ENCODE measurements at regions of chr10 and their contacts with region 1.

Region 1: GRCh38 chr10:72173635-72174296 is 42.0 kb upstream of the ANAPC16 start:
- DNase-seq: peak; percentile 86
- ATAC-seq: peak; percentile 91
- H3K4me3 ChIP-seq: no peak overlapping the region; the same call in 1 of the 2 replicates
- H3K27ac ChIP-seq: peak overlapping the region; percentile 67
- H3K4me1 ChIP-seq: peaks cover 35% of the 10 kb centered on the region
- H3K27me3 ChIP-seq: no peaks in the 10 kb centered on the region
- CTCF ChIP-seq: no peak
- EP300 ChIP-seq: no peak
- POLR2A ChIP-seq: no peak
- RAD21 ChIP-seq: no peak

Region 2: GRCh38 chr10:71948496-71949088 is 225.2 kb before region 1 on chr10:
- CTCF ChIA-PET with region 1: no interaction called
- POLR2A ChIA-PET with region 1: no interaction called
- RAD21 ChIA-PET with region 1: no interaction called
- SMC1A ChIA-PET with region 1: no interaction called
- in situ Hi-C with region 1: no loop called
- intact Hi-C with region 1: no loop called
- DNase-seq: no peak
- ATAC-seq: no peak
- H3K4me3 ChIP-seq: no peak overlapping the region
- H3K27ac ChIP-seq: no peak overlapping the region
- H3K4me1 ChIP-seq: no peaks in the 10 kb centered on the region
- H3K27me3 ChIP-seq: peaks cover 0 to 3% of the 10 kb centered on the region in 2 experiments; a peak in 2 of 4 replicates
- CTCF ChIP-seq: no peak
- EP300 ChIP-seq: no peak
- POLR2A ChIP-seq: no peak
- RAD21 ChIP-seq: no peak

Region 3: DNA sequence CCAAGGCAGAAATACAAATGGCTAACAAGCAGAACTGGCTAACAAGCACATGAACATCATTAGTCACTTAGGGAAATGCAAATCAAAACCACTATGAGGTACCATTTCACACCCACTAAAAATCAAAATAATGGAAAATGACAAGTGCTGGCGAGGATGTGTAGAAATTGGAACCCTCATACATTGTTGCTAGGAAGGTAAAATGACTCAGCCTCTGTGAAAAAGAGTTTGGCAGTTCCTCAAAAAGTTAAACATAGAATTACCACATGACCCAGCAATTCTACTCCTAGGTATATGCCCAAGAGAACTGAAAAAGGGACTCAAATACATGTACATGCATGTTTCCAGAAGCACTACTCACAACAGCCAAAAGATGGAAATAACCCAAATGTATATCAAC is 10.8 kb before region 1 on chr10:
- CTCF ChIA-PET with region 1: interaction called, 7 read pairs
- POLR2A ChIA-PET with region 1: interaction called, 7 read pairs
- RAD21 ChIA-PET with region 1: interaction called, 5 read pairs
- SMC1A ChIA-PET with region 1: interaction called, 19 read pairs
- in situ Hi-C with region 1: no loop called
- intact Hi-C with region 1: no loop called
- DNase-seq: peak; percentile 88
- ATAC-seq: peak; percentile 95
- H3K4me3 ChIP-seq: no peak overlapping the region
- H3K27ac ChIP-seq: peak overlapping the region; percentile 54; the same call in 1 of the 2 replicates
- H3K4me1 ChIP-seq: peaks cover 10% of the 10 kb centered on the region
- H3K27me3 ChIP-seq: no peaks in the 10 kb centered on the region
- CTCF ChIP-seq: no peak
- EP300 ChIP-seq: peak; percentile 80 to 83; a peak in 3 of 4 replicates
- POLR2A ChIP-seq: no peak
- RAD21 ChIP-seq: no peak

Region 4: DNA sequence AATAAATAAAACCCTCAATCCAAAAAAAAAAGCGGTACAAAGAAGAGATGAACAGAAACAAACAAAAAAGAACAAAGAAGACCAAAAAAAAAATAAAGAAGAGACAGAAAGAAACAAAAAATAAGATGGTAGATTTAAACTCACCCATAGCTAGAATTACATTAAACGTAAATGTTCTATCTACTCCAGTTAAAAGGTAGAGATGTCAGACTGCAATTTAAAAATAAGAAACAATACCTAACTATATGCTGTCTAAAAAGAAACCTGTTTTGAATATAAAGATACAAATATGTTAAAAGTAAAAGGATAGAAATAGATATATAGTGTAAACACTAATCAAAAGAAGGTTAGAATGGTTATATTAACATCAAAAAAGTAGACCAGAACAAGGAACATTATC is 10.4 kb after region 1 on chr10:
- CTCF ChIA-PET with region 1: interaction called, 8 read pairs
- POLR2A ChIA-PET with region 1: interaction called, 3 read pairs
- RAD21 ChIA-PET with region 1: no interaction called
- SMC1A ChIA-PET with region 1: interaction called, 17 read pairs
- in situ Hi-C with region 1: no loop called
- intact Hi-C with region 1: no loop called
- DNase-seq: no peak
- ATAC-seq: no peak
- H3K4me3 ChIP-seq: no peak overlapping the region
- H3K27ac ChIP-seq: no peak overlapping the region
- H3K4me1 ChIP-seq: no peaks in the 10 kb centered on the region; the same call in 1 of the 2 replicates
- H3K27me3 ChIP-seq: no peaks in the 10 kb centered on the region
- CTCF ChIP-seq: no peak
- EP300 ChIP-seq: no peak
- POLR2A ChIP-seq: no peak
- RAD21 ChIP-seq: no peak

Measured in GM12878 (cell line).